ENCODE measurements at regions of chr3 and their contacts with region 1.

Region 1: DNA sequence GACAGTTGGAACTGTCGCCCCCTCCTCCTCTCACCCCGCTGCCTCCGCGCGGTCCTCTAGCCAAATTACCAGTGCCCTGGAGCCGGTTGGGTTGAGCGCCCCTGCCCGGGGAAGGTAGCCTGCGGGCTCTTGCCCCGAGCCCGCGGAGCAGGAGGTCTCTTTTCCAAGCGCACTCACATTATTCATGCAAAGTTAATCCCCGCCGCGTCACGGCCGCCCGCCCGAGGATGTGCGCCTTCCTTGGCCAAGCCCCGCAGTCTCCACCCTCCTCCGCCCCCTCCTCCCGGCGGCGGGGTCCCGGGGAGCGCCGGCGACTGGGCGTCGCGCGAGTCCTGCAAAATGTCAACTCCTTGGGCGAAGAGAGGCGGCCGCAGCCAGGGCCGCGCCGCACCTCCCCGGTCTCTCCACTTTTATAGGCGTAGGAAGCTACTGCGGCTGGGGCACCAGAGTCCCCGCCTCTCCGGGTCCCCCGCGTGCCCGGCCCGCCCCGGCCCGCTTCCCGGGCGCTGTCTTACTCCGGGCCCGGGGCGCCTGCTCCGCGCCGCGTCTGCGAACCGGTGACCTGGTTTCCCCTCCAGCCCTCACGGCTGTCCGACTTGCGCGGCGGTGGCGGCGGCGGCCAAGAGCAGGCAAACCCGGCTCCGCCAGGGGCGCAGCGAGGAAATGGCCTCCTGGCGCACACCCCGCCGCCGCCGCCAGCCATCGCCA is at the start of gene THRB:
- DNase-seq: peak; percentile 75 to 84 (median 82)
- H3K4me3 ChIP-seq: peak within 1 kb of the TSS; percentile 37 to 87 (median 66)
- H3K27ac ChIP-seq: peak within 1 kb of the TSS; percentile 90 to 98 (median 95)
- H3K4me1 ChIP-seq: peaks cover 14 to 26% of the 10 kb centered on the region in 2 donors
- H3K27me3 ChIP-seq: no peaks in the 10 kb centered on the region
- CTCF ChIP-seq: peak in 1 of 6 experiments; percentile 48
- POLR2A ChIP-seq: peak; percentile 51 to 75
- total RNA-seq, gene THRB: 9.4 to 30.7 (median 17.9) TPM

Region 2: GRCh38 chr3:24264748-24265158 is 230.0 kb before region 1 on chr3:
- intact Hi-C with region 1: loop called in 1 of 2 experiments (anchors 10 kb)
- DNase-seq: peak in 4 of 7 donors; percentile 27 to 34 (median 30)
- H3K4me3 ChIP-seq: no peak overlapping the region
- H3K27ac ChIP-seq: no peak overlapping the region
- H3K4me1 ChIP-seq: peaks cover 0 to 2% of the 10 kb centered on the region in 2 donors
- H3K27me3 ChIP-seq: no peaks in the 10 kb centered on the region
- CTCF ChIP-seq: peak; percentile 50 to 86 (median 75)
- POLR2A ChIP-seq: no peak

Region 3: GRCh38 chr3:24818055-24818454 is 323.3 kb after region 1 on chr3:
- intact Hi-C with region 1: no loop called
- DNase-seq: no peak
- H3K4me3 ChIP-seq: no peak overlapping the region
- H3K27ac ChIP-seq: no peak overlapping the region
- H3K4me1 ChIP-seq: no peaks in the 10 kb centered on the region
- H3K27me3 ChIP-seq: no peaks in the 10 kb centered on the region
- CTCF ChIP-seq: no peak
- POLR2A ChIP-seq: no peak